ENCODE measurements at regions of chr6 and their contacts with region 1.

Region 1: DNA sequence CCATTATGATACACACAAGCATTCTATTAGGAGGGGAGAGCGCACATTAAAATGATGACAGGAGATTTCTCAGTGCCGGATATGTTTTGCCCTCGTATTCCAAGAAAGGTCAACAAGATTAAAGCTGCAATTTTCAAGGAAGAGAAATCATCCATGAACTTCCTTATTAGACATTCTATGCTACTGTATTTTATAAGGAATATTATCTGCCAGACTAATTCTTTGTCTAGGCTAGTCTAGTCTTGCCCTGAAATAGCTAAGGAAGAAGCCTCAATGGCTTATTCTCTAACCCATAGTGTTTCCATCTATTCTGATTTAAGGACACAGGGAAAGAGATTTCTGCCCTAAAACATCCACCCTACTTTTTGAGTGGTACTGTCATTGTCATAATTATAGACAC is 315.4 kb downstream of the ADGRG6 start:
- DNase-seq: no peak
- H3K4me3 ChIP-seq: no peak overlapping the region
- CTCF ChIP-seq: no peak

Region 2: DNA sequence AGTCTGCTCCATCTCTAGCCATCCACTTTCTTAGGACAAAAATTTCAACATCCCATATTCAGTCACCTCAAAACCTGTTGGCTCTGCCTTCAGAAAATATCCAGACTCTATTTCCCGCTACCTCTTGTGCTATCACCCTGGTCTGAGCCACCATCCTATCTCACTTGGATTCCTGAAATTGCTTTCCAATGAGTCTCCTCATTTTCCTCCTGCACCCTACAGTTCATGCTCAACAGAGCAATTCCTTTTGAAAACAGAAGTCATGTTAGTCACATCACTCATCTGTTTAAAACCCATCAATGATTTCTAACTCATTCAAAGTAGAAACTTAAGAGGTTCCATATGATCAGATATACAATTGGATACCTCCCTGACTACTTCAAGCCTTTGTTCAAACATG is 85.4 kb before region 1 on chr6:
- in situ Hi-C with region 1: loop called (anchors 5 kb)
- DNase-seq: no peak
- H3K4me3 ChIP-seq: no peak overlapping the region
- CTCF ChIP-seq: no peak

Measured in astrocyte of the cerebellum (primary cell).